ENCODE measurements at regions of chr3 and their contacts with region 1.

Region 1: GRCh38 chr3:61018807-61019206 is 232.4 kb downstream of the FHIT start:
- DNase-seq: no peak
- ATAC-seq: no peak
- H3K4me3 ChIP-seq: no peak overlapping the region
- H3K4me3 Mint-ChIP-seq: no peak overlapping the region
- H3K27ac ChIP-seq: no peak overlapping the region
- H3K27ac Mint-ChIP-seq: no peak overlapping the region
- H3K4me1 ChIP-seq: no peaks in the 10 kb centered on the region
- H3K4me1 Mint-ChIP-seq: no peaks in the 10 kb centered on the region
- H3K27me3 ChIP-seq: no peaks in the 10 kb centered on the region
- H3K27me3 Mint-ChIP-seq: no peaks in the 10 kb centered on the region

Region 2: DNA sequence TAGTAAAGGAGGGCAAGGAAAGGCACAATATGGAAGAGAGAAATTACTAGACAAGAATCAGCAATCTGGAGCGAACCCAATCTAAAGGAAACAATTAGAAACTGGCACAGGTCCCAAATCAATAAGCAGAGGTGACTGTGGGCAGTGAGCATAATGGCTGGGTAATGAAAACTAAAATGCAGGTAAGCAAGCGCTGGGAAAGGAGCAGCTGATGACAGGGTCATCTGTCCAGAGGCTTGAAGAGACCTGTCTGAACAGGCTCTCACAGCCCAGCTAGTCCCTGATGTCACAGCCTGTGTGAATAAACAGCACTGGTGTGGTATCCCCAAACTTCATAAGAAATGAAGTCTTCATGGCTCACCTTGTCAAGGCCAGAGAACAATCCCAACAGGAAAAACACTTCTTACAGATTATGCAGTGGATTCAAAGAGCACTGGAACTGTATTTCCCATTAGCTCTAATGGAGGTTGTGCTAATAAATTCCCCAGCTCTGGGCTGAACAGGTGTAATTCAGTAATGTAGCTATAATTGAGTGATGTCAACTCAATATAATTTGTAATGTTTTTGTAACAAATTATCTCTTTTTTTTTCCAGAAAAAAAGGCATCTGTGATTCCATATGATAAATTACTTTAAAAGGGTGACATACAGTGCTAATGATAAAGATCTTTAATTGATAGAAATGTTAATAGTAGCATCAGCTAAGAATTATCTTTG is 35.1 kb after region 1 on chr3:
- CTCF ChIA-PET with region 1: no interaction called
- POLR2A ChIA-PET with region 1: interaction called, 12 read pairs
- intact Hi-C with region 1: no loop called
- DNase-seq: no peak
- ATAC-seq: no peak
- H3K4me3 ChIP-seq: no peak overlapping the region
- H3K4me3 Mint-ChIP-seq: no peak overlapping the region
- H3K27ac ChIP-seq: no peak overlapping the region
- H3K27ac Mint-ChIP-seq: no peak overlapping the region
- H3K4me1 ChIP-seq: no peaks in the 10 kb centered on the region
- H3K4me1 Mint-ChIP-seq: no peaks in the 10 kb centered on the region
- H3K27me3 ChIP-seq: no peaks in the 10 kb centered on the region
- H3K27me3 Mint-ChIP-seq: no peaks in the 10 kb centered on the region

Region 3: GRCh38 chr3:61080737-61081445 is 62.1 kb after region 1 on chr3:
- CTCF ChIA-PET with region 1: no interaction called
- POLR2A ChIA-PET with region 1: no interaction called
- intact Hi-C with region 1: no loop called
- DNase-seq: no peak
- ATAC-seq: no peak
- H3K4me3 ChIP-seq: no peak overlapping the region
- H3K4me3 Mint-ChIP-seq: no peak overlapping the region
- H3K27ac ChIP-seq: no peak overlapping the region
- H3K27ac Mint-ChIP-seq: no peak overlapping the region
- H3K4me1 ChIP-seq: no peaks in the 10 kb centered on the region
- H3K4me1 Mint-ChIP-seq: no peaks in the 10 kb centered on the region
- H3K27me3 ChIP-seq: no peaks in the 10 kb centered on the region
- H3K27me3 Mint-ChIP-seq: no peaks in the 10 kb centered on the region

Region 4: GRCh38 chr3:61452535-61453090 is 433.8 kb after region 1 on chr3:
- CTCF ChIA-PET with region 1: no interaction called
- POLR2A ChIA-PET with region 1: no interaction called
- intact Hi-C with region 1: no loop called
- DNase-seq: no peak
- ATAC-seq: no peak
- H3K4me3 ChIP-seq: no peak overlapping the region
- H3K4me3 Mint-ChIP-seq: no peak overlapping the region
- H3K27ac ChIP-seq: no peak overlapping the region
- H3K27ac Mint-ChIP-seq: no peak overlapping the region
- H3K4me1 ChIP-seq: no peaks in the 10 kb centered on the region
- H3K4me1 Mint-ChIP-seq: no peaks in the 10 kb centered on the region
- H3K27me3 ChIP-seq: no peaks in the 10 kb centered on the region
- H3K27me3 Mint-ChIP-seq: peaks cover 2 to 9% (median 4%) of the 10 kb centered on the region in 5 donors

Measured in naive thymus-derived CD4-positive, alpha-beta T cell (primary cell).